CD4-positive, alpha-beta T cell (primary cell): ENCODE measurements at regions of chr13 and their contacts with region 1.

Region 1: DNA sequence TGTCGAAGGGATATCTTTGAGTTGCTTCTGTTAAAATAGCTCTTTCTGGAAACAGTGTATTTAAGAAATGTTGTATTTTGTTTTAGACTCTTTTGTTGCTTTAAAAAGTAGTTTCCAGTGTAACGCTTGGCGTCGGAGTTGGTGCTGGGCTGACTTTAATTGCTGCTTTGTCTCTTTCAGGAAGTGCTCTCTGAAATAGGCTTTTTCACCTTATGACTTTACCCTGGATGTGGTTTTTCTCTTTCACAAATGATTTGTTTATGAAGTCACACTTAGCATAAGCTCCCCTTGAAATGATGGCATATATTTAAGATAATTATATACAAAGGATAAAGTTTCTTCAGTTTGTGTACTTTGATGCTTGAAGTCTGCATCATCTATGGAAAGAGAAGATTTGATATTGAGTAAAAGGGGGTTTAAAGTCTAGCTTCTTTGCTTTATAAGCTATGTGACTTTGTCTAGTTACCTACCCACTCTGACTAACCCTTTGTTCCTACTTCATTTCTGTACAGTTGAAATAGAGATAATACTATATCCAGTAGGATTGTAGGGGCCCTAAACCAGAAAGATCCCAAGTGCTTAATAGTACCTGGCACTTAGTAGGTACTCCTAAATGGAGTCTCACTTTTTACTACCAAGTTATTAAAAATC is at the start of gene GPR18:
- DNase-seq: peak in 6 of 14 experiments; percentile 27 to 88 (median 66)
- ATAC-seq: peak; percentile 75
- H3K4me3 ChIP-seq: peak within 1 kb of the TSS; percentile 69
- H3K4me3 Mint-ChIP-seq: peak within 1 kb of the TSS; percentile 94
- H3K27ac ChIP-seq: peak within 1 kb of the TSS; percentile 70 to 78
- H3K27ac Mint-ChIP-seq: peak within 1 kb of the TSS; percentile 92
- H3K4me1 ChIP-seq: peaks cover 22% of the 10 kb centered on the region
- H3K4me1 Mint-ChIP-seq: peaks cover 83% of the 10 kb centered on the region
- H3K27me3 ChIP-seq: no peaks in the 10 kb centered on the region
- H3K27me3 Mint-ChIP-seq: no peaks in the 10 kb centered on the region
- CTCF ChIP-seq: no peak
- total RNA-seq, gene GPR18: 42.9 to 45.1 TPM

Region 2: GRCh38 chr13:98890186-98890585 is 368.1 kb before region 1 on chr13:
- CTCF ChIA-PET with region 1: no interaction called
- POLR2A ChIA-PET with region 1: no interaction called
- intact Hi-C with region 1: loop called in 1 of 2 experiments (anchors 10 kb)
- DNase-seq: no peak
- ATAC-seq: no peak
- H3K4me3 ChIP-seq: no peak overlapping the region
- H3K4me3 Mint-ChIP-seq: no peak overlapping the region
- H3K27ac ChIP-seq: no peak overlapping the region
- H3K27ac Mint-ChIP-seq: no peak overlapping the region
- H3K4me1 ChIP-seq: no peaks in the 10 kb centered on the region
- H3K4me1 Mint-ChIP-seq: no peaks in the 10 kb centered on the region
- H3K27me3 ChIP-seq: no peaks in the 10 kb centered on the region
- H3K27me3 Mint-ChIP-seq: no peaks in the 10 kb centered on the region
- CTCF ChIP-seq: no peak

Region 3: GRCh38 chr13:99176309-99177276 is 81.7 kb before region 1 on chr13:
- CTCF ChIA-PET with region 1: interaction called, 150 read pairs
- POLR2A ChIA-PET with region 1: interaction called, 7 read pairs
- intact Hi-C with region 1: no loop called
- DNase-seq: peak; percentile 64 to 89 (median 74)
- ATAC-seq: peak; percentile 93
- H3K4me3 ChIP-seq: peak overlapping the region; percentile 16
- H3K4me3 Mint-ChIP-seq: peak overlapping the region; percentile 42
- H3K27ac ChIP-seq: no peak overlapping the region
- H3K27ac Mint-ChIP-seq: peak overlapping the region; percentile 76
- H3K4me1 ChIP-seq: peaks cover 41% of the 10 kb centered on the region
- H3K4me1 Mint-ChIP-seq: peaks cover 40% of the 10 kb centered on the region
- H3K27me3 ChIP-seq: no peaks in the 10 kb centered on the region
- H3K27me3 Mint-ChIP-seq: no peaks in the 10 kb centered on the region
- CTCF ChIP-seq: peak; percentile 94

Region 4: DNA sequence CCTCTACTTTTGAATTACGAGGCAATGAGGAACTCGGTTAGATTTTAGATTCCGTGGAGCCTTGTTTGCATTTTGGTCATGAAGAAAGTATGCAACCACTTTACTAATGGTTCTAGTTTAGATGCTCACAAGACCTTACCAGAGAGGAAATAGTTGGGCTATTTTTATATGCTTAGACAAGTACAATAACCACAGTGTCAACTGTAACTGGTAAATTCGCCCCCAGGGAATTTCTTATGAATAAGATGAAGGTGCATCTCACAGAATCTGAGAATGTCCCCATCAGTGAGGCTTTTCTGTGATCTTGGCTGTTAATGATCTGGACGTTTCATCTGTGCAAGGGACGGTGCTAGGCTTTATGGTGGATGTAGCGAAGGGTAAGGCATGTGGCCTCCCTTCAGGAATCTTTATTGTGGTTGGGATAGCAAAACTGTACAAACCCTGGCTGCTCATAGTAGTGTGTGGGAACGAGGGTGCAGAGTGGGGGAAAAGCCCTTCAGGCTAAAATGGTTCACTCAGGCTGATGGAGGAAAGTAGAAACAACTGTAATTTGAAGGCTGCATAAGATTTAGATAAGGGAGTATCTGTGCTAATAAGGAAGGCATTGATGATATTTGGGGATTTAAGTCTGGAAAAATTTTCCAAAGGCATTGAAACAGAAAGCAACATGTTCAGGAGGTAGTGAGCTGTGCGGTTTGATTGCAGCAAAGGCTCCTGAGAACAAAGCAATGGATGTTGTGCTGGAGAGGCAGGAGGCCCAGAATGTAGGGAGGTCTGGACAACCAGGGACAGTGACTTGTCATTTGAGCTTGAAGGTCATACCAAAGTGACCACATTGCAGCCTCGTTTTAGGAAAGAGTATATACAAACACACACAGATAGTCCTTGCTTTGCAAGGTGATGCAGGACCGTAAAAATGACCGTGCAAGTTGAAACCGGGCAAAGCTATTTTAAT is 29.3 kb before region 1 on chr13:
- CTCF ChIA-PET with region 1: interaction called, 5 read pairs
- POLR2A ChIA-PET with region 1: interaction called, 13 read pairs
- intact Hi-C with region 1: no loop called
- DNase-seq: peak in 3 of 14 experiments; percentile 48 to 52 (median 48)
- ATAC-seq: peak; percentile 30
- H3K4me3 ChIP-seq: peak overlapping the region; percentile 2
- H3K4me3 Mint-ChIP-seq: peak overlapping the region; percentile 69
- H3K27ac ChIP-seq: peak overlapping the region; percentile 31 to 45
- H3K27ac Mint-ChIP-seq: peak overlapping the region; percentile 75
- H3K4me1 ChIP-seq: peaks cover 74% of the 10 kb centered on the region
- H3K4me1 Mint-ChIP-seq: peaks cover 83% of the 10 kb centered on the region
- H3K27me3 ChIP-seq: no peaks in the 10 kb centered on the region
- H3K27me3 Mint-ChIP-seq: no peaks in the 10 kb centered on the region
- CTCF ChIP-seq: no peak

Region 5: DNA sequence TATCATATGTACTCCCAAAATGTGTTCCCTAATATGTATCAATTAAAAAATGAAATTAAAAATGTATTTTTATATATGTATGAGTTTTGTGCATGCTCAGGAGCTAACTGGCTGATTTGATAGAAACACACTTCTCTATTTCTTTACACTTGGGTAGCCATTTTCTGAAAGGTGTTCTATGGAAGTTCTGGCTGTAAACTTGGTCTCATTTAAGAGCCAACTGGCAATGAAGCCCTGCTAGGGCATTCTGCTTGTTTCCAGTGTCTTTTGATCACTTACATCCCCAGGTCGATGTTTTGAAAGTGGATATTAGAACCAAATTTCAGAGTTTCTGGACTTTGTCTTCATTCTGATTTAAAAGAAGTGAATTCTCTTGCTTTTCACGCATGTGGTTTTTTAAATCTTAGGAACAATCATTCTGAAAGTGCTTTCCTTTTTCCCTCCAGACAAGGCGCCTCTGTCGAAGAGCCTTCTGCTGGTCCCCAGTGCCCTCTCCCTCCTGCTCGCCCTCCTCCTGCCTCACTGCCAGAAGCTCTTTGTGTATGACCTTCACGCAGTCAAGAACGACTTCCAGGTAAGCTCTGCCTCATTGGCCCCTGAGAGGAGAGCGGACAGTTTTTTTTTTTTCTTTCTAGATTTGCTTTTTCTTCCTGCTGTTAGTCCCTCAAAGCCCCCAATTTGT is 20.2 kb before region 1 on chr13:
- CTCF ChIA-PET with region 1: interaction called, 5 read pairs
- POLR2A ChIA-PET with region 1: interaction called, 25 read pairs
- intact Hi-C with region 1: loop called in 1 of 2 experiments (anchors 2 kb)
- DNase-seq: peak in 5 of 14 experiments; percentile 26 to 73 (median 62)
- ATAC-seq: peak; percentile 77
- H3K4me3 ChIP-seq: peak overlapping the region; percentile 45
- H3K4me3 Mint-ChIP-seq: peak overlapping the region; percentile 83
- H3K27ac ChIP-seq: peak overlapping the region; percentile 72 to 73
- H3K27ac Mint-ChIP-seq: peak overlapping the region; percentile 94
- H3K4me1 ChIP-seq: peaks cover 32% of the 10 kb centered on the region
- H3K4me1 Mint-ChIP-seq: peaks cover 72% of the 10 kb centered on the region
- H3K27me3 ChIP-seq: no peaks in the 10 kb centered on the region
- H3K27me3 Mint-ChIP-seq: no peaks in the 10 kb centered on the region
- CTCF ChIP-seq: no peak

Region 6: GRCh38 chr13:99322297-99323103 is 64.2 kb after region 1 on chr13:
- CTCF ChIA-PET with region 1: no interaction called
- POLR2A ChIA-PET with region 1: no interaction called
- intact Hi-C with region 1: no loop called
- DNase-seq: peak in 7 of 14 experiments; percentile 16 to 84 (median 57)
- ATAC-seq: peak; percentile 72
- H3K4me3 ChIP-seq: peak overlapping the region; percentile 19
- H3K4me3 Mint-ChIP-seq: peak overlapping the region; percentile 59
- H3K27ac ChIP-seq: peak overlapping the region; percentile 69 to 80
- H3K27ac Mint-ChIP-seq: peak overlapping the region; percentile 93
- H3K4me1 ChIP-seq: peaks cover 58% of the 10 kb centered on the region
- H3K4me1 Mint-ChIP-seq: peaks cover 83% of the 10 kb centered on the region
- H3K27me3 ChIP-seq: no peaks in the 10 kb centered on the region
- H3K27me3 Mint-ChIP-seq: no peaks in the 10 kb centered on the region
- CTCF ChIP-seq: no peak